ENCODE measurements at regions of chr5 and their contacts with region 1.

Region 1: DNA sequence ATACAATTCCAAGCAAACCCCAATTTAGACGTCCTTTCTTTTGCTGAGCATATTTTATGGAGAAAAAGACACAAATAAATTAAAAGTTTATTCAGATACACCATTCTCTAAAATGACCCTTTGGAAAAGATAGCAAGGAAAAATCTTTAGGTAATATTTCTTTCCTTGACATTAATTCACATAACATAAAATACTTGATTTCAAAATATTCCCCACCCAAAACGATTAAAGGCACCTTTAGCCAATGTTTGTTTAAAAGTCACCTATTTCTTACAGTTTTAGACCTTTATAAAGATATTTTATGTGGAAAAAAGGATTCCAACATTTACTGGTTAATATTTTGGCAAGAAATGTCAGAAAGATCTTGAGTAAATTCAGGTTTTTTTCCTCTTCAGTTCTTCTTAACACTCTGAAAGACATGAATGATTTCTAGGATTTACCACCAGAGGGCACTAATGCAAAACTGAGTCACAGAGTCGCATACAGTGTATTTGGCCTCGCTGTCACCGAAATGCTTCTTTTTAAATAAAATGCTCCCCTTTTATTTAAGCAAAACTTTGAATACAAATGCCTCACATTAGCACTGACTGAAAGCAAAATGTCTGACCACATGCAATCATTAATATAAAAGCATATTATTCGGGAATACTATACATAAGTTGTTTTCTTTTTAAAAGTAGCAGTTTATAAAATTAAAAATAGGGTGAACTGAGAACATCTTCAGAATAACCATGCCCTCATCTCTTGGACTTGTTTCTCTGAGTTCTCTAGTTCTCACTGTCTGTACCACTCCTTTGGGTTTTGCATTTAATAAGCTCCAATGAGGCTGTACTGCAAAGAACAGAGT is 122.5 kb downstream of the SLC1A3 start:
- DNase-seq: peak in 1 of 2 donors; percentile 77
- ATAC-seq: peak; percentile 43 to 56 (median 51)
- H3K4me3 ChIP-seq: no peak overlapping the region
- H3K4me3 Mint-ChIP-seq: no peak overlapping the region
- H3K27ac ChIP-seq: no peak overlapping the region
- H3K27ac Mint-ChIP-seq: no peak overlapping the region
- H3K4me1 ChIP-seq: peaks cover 13% of the 10 kb centered on the region
- H3K4me1 Mint-ChIP-seq: peaks cover 14 to 19% of the 10 kb centered on the region in 2 donors
- H3K27me3 ChIP-seq: no peaks in the 10 kb centered on the region
- H3K27me3 Mint-ChIP-seq: no peaks in the 10 kb centered on the region
- CTCF ChIP-seq: peak; percentile 78

Region 2: DNA sequence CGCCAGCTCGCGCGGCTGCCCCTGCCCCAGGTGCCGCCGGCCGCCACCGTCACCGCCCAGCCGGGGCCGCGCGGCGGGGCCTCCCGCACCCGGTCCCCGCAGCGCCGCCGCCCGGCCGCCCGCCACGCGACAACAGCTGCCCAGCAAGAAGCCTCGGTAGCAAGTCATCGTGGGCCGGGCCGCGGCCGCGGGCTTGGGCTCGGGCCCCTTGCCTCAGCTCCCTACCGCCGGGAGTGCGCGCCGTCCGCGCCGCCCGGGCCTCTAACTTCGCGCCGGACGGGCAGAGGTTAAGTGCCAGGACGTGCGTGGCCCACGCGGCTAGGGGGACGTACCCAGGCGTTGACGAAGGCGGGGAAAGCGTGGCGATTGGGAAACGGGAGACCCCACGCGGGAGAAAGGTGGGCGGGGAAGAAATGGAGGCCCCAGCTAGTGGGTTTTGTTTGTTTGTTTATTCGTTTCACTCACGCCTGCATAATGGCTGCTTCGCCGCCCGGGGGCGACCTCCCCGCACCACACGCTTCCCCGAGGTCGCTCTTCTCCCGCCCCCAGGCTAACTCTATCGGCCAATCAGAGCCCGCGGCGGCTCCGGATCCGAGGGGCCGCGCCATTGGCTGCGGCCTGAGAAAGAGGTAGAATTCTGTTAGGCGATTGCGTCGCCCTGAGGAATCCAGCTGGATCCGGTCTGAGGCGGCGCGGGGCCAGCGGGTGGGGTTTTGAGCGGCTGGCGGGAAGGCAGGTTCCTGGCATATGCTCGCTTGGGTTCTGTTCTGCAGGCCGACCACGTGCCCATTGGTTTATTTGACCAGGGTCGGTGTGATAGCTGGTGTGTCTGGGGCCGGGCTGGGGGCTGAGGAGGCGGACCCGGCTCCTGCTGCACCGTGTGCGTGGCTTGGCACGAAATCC is 487.0 kb before region 1 on chr5 and contains the start of gene NADK2:
- intact Hi-C with region 1: no loop called
- DNase-seq: peak; percentile 93 to 96
- ATAC-seq: peak; percentile 86 to 93 (median 86)
- H3K4me3 ChIP-seq: peak within 1 kb of the TSS; percentile 91
- H3K4me3 Mint-ChIP-seq: peak within 1 kb of the TSS; percentile 93
- H3K27ac ChIP-seq: peak within 1 kb of the TSS; percentile 95
- H3K27ac Mint-ChIP-seq: peak within 1 kb of the TSS; percentile 54 to 92
- H3K4me1 ChIP-seq: peaks cover 15% of the 10 kb centered on the region
- H3K4me1 Mint-ChIP-seq: peaks cover 25 to 42% of the 10 kb centered on the region in 2 donors
- H3K27me3 ChIP-seq: no peaks in the 10 kb centered on the region
- H3K27me3 Mint-ChIP-seq: no peaks in the 10 kb centered on the region
- CTCF ChIP-seq: peak; percentile 66
- total RNA-seq, gene NADK2: 13.1 to 16.2 (median 14.3) TPM

Region 3: DNA sequence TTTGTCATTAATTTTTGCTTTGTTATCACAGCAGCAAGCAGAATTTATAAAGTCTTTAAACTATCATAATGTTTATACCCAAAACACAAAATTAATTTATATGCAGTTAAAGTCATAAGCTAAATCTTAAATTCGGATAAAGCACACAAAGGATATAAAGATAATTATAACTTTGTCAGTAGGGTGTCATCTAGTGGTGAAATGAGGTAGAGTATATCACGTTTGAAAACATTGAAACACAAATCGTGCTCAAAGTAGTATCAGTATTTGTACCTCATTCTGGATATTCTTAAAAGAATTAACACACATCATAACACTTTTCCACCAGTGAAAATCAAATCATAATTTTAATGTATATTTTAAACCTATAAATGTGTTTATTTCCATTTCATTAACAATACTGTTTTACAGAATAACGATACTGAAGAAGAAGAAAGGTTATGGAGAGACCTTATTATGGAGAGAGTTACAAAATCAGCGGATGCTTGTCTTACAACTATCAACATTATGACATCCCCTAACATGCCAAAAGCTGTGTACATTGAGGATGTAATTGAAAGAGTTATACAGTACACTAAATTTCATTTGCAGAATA is 277.1 kb after region 1 on chr5:
- intact Hi-C with region 1: loop called (anchors 5 kb)
- DNase-seq: peak in 1 of 2 donors; percentile 34
- ATAC-seq: peak in 1 of 3 donors; percentile 48
- H3K4me3 ChIP-seq: no peak overlapping the region
- H3K4me3 Mint-ChIP-seq: no peak overlapping the region
- H3K27ac ChIP-seq: no peak overlapping the region
- H3K27ac Mint-ChIP-seq: no peak overlapping the region
- H3K4me1 ChIP-seq: no peaks in the 10 kb centered on the region
- H3K4me1 Mint-ChIP-seq: peaks cover 0 to 7% of the 10 kb centered on the region in 2 donors
- H3K27me3 ChIP-seq: no peaks in the 10 kb centered on the region
- H3K27me3 Mint-ChIP-seq: no peaks in the 10 kb centered on the region
- CTCF ChIP-seq: peak; percentile 52

Measured in natural killer cell (primary cell).